ENCODE measurements at regions of chr9 and their contacts with region 1.

Region 1: DNA sequence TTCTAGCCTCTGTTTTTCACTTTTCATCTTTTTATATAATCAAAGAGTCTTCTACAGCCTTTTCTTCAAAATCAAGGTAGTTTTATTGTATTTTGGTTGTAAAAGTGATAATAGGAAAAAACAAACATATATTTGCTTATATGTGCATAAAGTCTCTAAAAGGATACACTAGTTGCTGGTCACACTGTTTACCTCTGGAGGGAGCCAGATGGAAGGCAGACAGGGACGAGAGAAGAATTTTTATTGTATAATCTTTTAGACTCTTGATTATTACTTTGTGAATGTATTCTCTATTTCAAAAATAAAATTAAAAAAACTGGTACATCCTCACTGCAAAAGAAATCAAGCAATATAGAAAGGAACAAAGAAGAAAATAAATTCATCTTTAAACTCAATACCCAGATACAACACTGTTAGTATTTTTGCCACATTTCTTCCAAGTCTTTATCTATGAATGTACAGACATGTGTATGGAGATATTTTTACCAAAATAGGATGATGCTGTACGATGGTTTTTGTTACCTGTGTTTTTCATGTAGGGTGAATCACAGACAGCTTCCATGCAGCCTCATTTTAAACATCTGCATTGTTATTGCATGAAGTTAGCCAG is 6.1 kb upstream of the RNF183 start:
- DNase-seq: peak in 14 of 35 experiments; percentile 2 to 54 (median 9)
- ATAC-seq: peak in 2 of 4 experiments; percentile 48 to 57
- H3K4me3 ChIP-seq: no peak overlapping the region
- H3K4me3 Mint-ChIP-seq: no peak overlapping the region
- H3K27ac ChIP-seq: no peak overlapping the region
- H3K27ac Mint-ChIP-seq: no peak overlapping the region
- H3K4me1 ChIP-seq: no peaks in the 10 kb centered on the region
- H3K4me1 Mint-ChIP-seq: no peaks in the 10 kb centered on the region
- H3K27me3 ChIP-seq: peaks cover 0 to 9% of the 10 kb centered on the region in 2 experiments
- H3K27me3 Mint-ChIP-seq: peaks cover 0 to 6% of the 10 kb centered on the region in 2 donors

Region 2: GRCh38 chr9:114405294-114406034 is 1096.2 kb after region 1 on chr9:
- CTCF ChIA-PET with region 1: interaction called in 1 of 2 experiments, 21 read pairs
- POLR2A ChIA-PET with region 1: no interaction called
- DNase-seq: peak; percentile 57 to 91 (median 76)
- ATAC-seq: peak; percentile 93 to 100 (median 97)
- H3K4me3 ChIP-seq: no peak overlapping the region
- H3K4me3 Mint-ChIP-seq: no peak overlapping the region
- H3K27ac ChIP-seq: no peak overlapping the region
- H3K27ac Mint-ChIP-seq: peak overlapping the region; percentile 62 to 68
- H3K4me1 ChIP-seq: peaks cover 0 to 10% of the 10 kb centered on the region in 2 experiments
- H3K4me1 Mint-ChIP-seq: peaks cover 6 to 8% (median 6%) of the 10 kb centered on the region in 3 donors
- H3K27me3 ChIP-seq: no peaks in the 10 kb centered on the region
- H3K27me3 Mint-ChIP-seq: no peaks in the 10 kb centered on the region

Measured in T-cell (primary cell).